Activated CD8-positive, alpha-beta T cell treated with anti-CD3 and anti-CD28 coated beads for 36 hours (primary cell): ENCODE measurements at regions of chr18 and their contacts with region 1.

Region 1: GRCh38 chr18:62324917-62325805 is at the start of gene TNFRSF11A:
- DNase-seq: peak; percentile 67
- ATAC-seq: peak; percentile 82
- H3K4me3 Mint-ChIP-seq: peak within 1 kb of the TSS; percentile 77
- H3K27ac Mint-ChIP-seq: peak within 1 kb of the TSS; percentile 62
- H3K4me1 Mint-ChIP-seq: peaks cover 36% of the 10 kb centered on the region
- H3K27me3 Mint-ChIP-seq: peaks cover 68% of the 10 kb centered on the region
- CTCF ChIP-seq: peak; percentile 64
- total RNA-seq, gene TNFRSF11A: 7.3 to 8.0 TPM

Region 2: DNA sequence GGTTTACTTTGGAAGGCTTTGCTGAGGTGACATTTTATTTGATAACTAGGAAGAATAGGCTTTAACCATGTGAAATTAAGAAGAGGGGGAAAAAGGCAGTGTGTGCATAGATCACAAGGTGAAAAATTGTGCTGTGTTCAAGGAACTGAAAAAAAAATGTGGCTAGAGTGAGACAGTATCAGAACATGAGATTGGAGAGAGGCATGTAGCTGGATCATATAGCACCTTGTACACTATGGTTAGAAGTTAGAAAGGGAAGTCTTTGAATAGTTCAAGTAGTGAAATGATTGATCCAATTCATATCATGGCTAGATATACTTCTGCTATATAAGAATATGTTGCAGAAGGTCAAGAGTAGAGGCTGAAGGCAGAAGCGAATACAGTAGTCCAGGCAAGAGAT is 12.3 kb before region 1 on chr18:
- CTCF ChIA-PET with region 1: interaction called, 18 read pairs
- POLR2A ChIA-PET with region 1: interaction called, 3 read pairs
- intact Hi-C with region 1: no loop called
- DNase-seq: no peak
- ATAC-seq: no peak
- H3K4me3 Mint-ChIP-seq: no peak overlapping the region
- H3K27ac Mint-ChIP-seq: no peak overlapping the region
- H3K4me1 Mint-ChIP-seq: no peaks in the 10 kb centered on the region
- H3K27me3 Mint-ChIP-seq: peaks cover 2% of the 10 kb centered on the region
- CTCF ChIP-seq: no peak